Cardiac septum (tissue), 1 donor: ENCODE measurements at regions of chr11 and their contacts with region 1.

Region 1: DNA sequence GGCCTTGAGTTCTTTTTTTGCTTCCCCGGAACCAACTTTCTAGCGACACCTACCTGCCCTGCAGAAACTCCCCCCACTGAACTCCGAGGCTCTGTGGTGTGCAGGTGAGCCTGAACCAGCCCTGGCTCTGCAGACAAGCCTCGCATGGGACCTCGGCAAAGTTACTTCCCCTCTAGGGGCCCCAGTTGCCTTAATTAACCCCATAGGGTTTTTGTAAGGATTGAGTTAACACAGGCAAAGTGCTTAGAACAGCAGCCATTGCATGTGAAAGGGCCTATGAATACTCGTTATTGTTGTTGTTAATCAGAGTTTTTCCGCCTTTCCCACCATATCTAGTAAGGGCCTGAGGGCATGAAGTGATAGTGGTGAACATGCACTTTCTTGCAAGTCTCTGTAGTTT is 12.6 kb upstream of the SYT13 start:
- DNase-seq: no peak

Region 2: DNA sequence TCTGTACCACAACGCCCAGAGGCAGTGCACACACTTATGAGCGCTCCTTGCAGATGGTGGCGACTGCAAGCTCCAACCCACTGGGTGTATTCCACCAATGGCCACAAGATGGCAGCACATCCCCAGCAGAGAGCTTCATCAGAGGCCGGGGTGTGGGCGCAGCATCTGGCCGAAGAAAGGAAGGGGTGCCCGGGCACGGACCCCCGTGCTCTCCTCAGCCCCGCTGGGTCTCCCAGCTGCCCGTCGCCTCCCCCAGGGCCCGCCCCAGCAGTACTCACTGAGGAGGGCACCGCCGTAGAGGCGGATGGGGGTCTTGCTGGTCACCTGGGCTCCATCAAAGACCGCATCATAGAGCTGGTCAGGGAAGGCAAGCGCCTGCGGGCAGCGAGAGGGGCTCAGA is 362.2 kb before region 1 on chr11:
- intact Hi-C with region 1: loop called (anchors 10 kb)
- DNase-seq: peak; percentile 91

Region 3: DNA sequence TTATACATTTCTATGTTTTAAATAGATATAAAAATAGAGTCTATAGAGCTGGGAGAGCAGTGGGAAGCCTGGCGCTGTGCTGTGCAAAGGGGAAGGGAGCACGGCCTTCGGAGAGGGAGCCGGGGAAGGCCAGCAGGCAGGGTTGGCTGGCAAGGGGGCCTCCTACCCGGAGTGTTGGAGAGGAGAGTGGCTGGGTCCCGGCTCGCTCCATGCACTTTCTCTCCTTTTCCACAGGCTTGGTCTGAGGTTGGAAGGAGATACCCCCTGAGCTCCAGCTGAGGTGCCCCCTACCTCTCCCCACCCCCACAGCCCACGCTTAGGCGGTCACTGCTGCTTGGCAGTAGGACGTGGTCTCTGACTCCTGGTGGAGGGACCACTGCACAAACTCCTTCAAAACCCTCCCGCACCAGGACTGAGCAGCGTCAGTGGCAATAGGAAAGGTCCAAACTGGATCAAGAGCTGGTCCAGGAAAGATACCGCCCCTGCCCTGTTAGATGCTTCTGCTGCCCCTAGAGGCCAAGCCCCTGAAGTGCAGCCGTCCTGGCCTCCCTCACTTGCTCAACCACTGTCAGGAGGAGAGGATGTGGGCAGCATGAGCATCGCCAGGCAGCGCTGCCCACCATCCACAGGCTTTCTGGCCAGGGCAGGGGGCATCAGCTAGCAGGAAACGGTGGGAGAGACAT is 65.5 kb before region 1 on chr11:
- intact Hi-C with region 1: no loop called
- DNase-seq: no peak

Region 4: DNA sequence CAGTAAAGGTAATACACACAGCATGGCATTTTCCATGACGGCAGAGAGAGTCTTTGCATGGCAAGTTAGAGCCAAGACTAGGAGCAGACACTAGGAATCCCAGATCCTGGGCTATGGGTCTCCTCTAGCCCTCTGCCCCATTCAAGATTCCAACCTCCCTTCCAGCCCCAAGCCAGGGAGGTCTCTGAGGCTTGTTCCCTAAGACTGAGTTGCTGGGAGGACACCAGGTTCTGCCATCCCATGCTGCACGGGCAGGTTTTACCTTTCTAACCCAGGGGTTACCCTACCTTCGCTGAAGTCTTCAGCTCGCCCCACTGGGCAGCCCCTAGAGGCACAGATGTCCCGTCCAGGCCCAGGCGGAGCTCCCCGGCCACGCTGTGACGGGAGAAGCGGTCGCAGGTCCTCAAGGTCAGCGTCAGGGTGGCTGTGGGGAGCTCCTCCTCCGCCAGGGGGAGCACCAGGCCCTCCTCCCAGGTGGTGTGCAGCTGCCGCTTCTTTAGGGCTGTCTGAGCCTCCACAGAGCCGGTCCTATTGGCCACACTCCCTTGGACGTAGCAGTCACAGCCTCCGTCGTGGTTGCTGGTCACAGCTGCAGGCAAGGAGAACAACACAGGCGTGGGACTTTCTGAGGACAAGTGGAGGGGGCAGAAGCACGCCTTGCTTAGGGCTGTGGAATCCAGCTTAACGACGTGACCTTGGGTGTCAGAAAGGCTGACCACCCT is 46.4 kb before region 1 on chr11:
- intact Hi-C with region 1: loop called (anchors 5 kb)
- DNase-seq: no peak

Region 5: DNA sequence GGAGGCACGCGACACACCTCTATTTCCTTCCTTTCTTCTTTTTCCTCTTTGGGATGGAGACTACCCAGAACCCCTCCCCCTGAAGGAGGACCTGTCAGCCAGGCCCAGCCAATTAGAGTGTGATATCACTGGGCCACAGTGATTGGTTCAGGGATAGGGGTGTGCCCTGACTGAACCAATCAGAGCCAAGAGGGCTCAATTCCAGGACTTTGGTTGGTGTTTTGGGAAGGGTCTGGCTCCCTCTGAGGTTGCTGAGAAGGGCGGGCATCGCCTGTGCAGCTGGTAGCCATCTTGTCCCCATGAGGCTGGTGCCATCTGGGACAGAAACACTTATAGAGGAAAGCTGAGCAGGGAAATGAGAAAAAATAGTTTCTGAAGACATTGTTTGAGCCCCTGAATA is 295.3 kb after region 1 on chr11:
- intact Hi-C with region 1: no loop called
- DNase-seq: no peak